ENCODE measurements at regions of chr9 and their contacts with region 1.

Region 1: DNA sequence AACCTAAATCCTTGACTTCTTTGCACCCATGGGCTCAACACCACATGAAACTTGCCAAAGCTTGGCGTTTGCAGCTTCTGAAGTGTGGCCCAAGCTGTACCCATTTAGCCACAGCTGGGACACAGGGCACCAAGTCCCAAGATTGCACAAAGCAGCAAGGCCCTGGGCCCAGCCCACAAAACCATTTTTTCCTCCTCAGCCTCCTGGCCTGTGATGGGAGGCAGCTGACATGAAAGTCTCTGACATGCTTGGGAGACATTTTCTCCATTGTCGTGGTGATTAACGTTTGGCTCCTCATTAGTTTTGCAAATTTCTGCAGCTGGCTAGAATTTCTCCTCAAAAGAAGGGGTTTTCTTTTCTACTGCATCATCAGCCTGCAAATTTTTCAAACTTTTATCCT is 32.0 kb downstream of the ACTL7B start:
- DNase-seq: no peak
- H3K4me3 ChIP-seq: no peak overlapping the region
- H3K27ac ChIP-seq: no peak overlapping the region
- H3K4me1 ChIP-seq: no peaks in the 10 kb centered on the region
- H3K27me3 ChIP-seq: no peaks in the 10 kb centered on the region
- CTCF ChIP-seq: no peak
- POLR2A ChIP-seq: no peak

Region 2: GRCh38 chr9:108347463-108348188 is 476.2 kb before region 1 on chr9:
- intact Hi-C with region 1: loop called (anchors 5 kb)
- DNase-seq: no peak
- H3K4me3 ChIP-seq: no peak overlapping the region
- H3K27ac ChIP-seq: no peak overlapping the region
- H3K4me1 ChIP-seq: peaks cover 5% of the 10 kb centered on the region
- H3K27me3 ChIP-seq: no peaks in the 10 kb centered on the region
- CTCF ChIP-seq: no peak
- POLR2A ChIP-seq: no peak

Region 3: GRCh38 chr9:108869092-108869725 is 45.4 kb after region 1 on chr9:
- intact Hi-C with region 1: no loop called
- DNase-seq: no peak
- H3K4me3 ChIP-seq: no peak overlapping the region
- H3K27ac ChIP-seq: no peak overlapping the region
- H3K4me1 ChIP-seq: no peaks in the 10 kb centered on the region
- H3K27me3 ChIP-seq: no peaks in the 10 kb centered on the region
- CTCF ChIP-seq: no peak
- POLR2A ChIP-seq: no peak

Region 4: DNA sequence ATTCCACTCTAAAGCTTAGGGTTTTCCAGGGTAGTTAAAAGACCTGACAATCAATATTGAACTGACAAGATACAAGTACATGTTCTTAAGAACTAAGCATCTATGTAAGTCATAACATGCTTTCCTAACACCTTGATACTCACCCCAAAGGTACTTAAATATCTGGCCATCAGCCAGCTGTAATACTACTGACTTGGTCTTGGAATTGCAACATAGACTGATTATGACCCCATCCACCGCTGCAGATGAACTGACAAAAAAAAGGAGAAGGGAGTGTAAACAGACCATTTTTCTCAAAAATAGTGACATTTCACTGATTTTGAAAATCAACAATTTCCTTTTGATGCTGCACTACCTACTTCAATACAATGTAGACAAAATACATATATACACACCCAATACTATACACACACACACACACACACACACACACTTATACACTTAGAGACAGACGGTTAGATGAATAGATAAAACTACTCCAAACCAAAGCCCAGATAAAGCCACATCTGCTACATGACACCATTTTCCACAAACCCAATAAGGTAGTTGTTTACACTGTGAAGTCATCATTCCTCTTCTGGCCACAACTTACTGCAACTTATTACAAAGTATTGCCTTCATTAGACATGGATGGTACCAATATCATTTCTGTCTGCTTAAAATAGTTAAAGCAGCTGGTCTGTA is 79.7 kb after region 1 on chr9:
- intact Hi-C with region 1: no loop called
- DNase-seq: no peak
- H3K4me3 ChIP-seq: no peak overlapping the region
- H3K27ac ChIP-seq: no peak overlapping the region
- H3K4me1 ChIP-seq: no peaks in the 10 kb centered on the region
- H3K27me3 ChIP-seq: no peaks in the 10 kb centered on the region
- CTCF ChIP-seq: no peak
- POLR2A ChIP-seq: no peak

Region 5: GRCh38 chr9:110543631-110544051 is 1719.8 kb after region 1 on chr9:
- intact Hi-C with region 1: no loop called
- DNase-seq: no peak
- H3K4me3 ChIP-seq: no peak overlapping the region
- H3K27ac ChIP-seq: no peak overlapping the region
- H3K4me1 ChIP-seq: peaks cover 13% of the 10 kb centered on the region
- H3K27me3 ChIP-seq: no peaks in the 10 kb centered on the region
- CTCF ChIP-seq: no peak
- POLR2A ChIP-seq: no peak

Measured in vagina (tissue), 2 donors.